Lower leg skin (tissue), 4 donors: ENCODE measurements at regions of chr11 and their contacts with region 1.

Region 1: GRCh38 chr11:36333897-36334296 is 37.8 kb downstream of the PRR5L start:
- DNase-seq: no peak
- H3K4me3 ChIP-seq: no peak overlapping the region
- CTCF ChIP-seq: no peak
- POLR2A ChIP-seq: no peak

Region 2: DNA sequence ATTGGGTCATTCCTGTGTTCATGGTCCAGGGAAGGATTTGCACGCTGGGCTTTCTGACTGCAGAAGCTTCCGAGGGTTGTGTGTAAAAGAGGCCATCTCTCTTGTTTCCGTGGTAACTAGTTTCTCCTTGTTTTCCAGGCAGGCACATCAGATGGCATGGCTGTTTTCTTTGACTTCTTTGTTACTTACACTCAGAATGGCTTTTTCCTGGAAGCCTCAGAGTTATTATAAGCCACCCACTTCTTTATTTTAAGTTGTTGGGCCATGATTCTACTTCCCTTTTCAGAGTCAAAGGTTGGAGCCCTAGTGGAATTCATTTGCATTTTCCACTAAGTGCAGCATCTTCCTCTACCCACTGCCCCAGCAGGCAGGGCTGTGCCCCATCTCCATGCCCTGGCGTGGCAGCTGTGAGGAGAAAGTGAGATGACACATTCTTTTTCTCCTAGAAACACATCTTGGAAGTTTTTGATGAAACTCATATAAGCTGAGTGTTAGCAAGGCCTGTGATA is 57.1 kb after region 1 on chr11:
- intact Hi-C with region 1: no loop called
- DNase-seq: no peak
- H3K4me3 ChIP-seq: no peak overlapping the region
- CTCF ChIP-seq: no peak
- POLR2A ChIP-seq: no peak

Region 3: GRCh38 chr11:36874291-36874690 is 540.4 kb after region 1 on chr11:
- intact Hi-C with region 1: loop called (anchors 5 kb)
- DNase-seq: no peak
- H3K4me3 ChIP-seq: no peak overlapping the region
- CTCF ChIP-seq: no peak
- POLR2A ChIP-seq: no peak